Naive thymus-derived CD4-positive, alpha-beta T cell (primary cell): ENCODE measurements at regions of chr7 and their contacts with region 1.

Region 1: GRCh38 chr7:39633563-39634477 is 10.4 kb downstream of the RALA start:
- DNase-seq: peak in 7 of 9 donors; percentile 53 to 76 (median 68)
- ATAC-seq: peak; percentile 93
- H3K4me3 ChIP-seq: peak overlapping the region; percentile 37
- H3K4me3 Mint-ChIP-seq: peak overlapping the region; percentile 71 to 92 (median 82)
- H3K27ac ChIP-seq: peak overlapping the region; percentile 79
- H3K27ac Mint-ChIP-seq: peak overlapping the region; percentile 92 to 99 (median 98)
- H3K4me1 ChIP-seq: peaks cover 18 to 29% of the 10 kb centered on the region in 2 donors
- H3K4me1 Mint-ChIP-seq: peaks cover 53 to 93% (median 72%) of the 10 kb centered on the region in 7 donors
- H3K27me3 ChIP-seq: no peaks in the 10 kb centered on the region
- H3K27me3 Mint-ChIP-seq: no peaks in the 10 kb centered on the region

Region 2: GRCh38 chr7:39580149-39580874 is 53.5 kb before region 1 on chr7:
- CTCF ChIA-PET with region 1: interaction called, 5 read pairs
- POLR2A ChIA-PET with region 1: interaction called, 4 read pairs
- intact Hi-C with region 1: loop called in 1 of 2 experiments (anchors 2 kb)
- DNase-seq: peak; percentile 38 to 79 (median 73)
- ATAC-seq: peak; percentile 98
- H3K4me3 ChIP-seq: no peak overlapping the region
- H3K4me3 Mint-ChIP-seq: no peak overlapping the region
- H3K27ac ChIP-seq: no peak overlapping the region
- H3K27ac Mint-ChIP-seq: peak overlapping the region in 5 of 9 donors; percentile 23 to 61 (median 44)
- H3K4me1 ChIP-seq: no peaks in the 10 kb centered on the region
- H3K4me1 Mint-ChIP-seq: peaks cover 2 to 12% (median 10%) of the 10 kb centered on the region in 7 donors
- H3K27me3 ChIP-seq: no peaks in the 10 kb centered on the region
- H3K27me3 Mint-ChIP-seq: no peaks in the 10 kb centered on the region

Region 3: DNA sequence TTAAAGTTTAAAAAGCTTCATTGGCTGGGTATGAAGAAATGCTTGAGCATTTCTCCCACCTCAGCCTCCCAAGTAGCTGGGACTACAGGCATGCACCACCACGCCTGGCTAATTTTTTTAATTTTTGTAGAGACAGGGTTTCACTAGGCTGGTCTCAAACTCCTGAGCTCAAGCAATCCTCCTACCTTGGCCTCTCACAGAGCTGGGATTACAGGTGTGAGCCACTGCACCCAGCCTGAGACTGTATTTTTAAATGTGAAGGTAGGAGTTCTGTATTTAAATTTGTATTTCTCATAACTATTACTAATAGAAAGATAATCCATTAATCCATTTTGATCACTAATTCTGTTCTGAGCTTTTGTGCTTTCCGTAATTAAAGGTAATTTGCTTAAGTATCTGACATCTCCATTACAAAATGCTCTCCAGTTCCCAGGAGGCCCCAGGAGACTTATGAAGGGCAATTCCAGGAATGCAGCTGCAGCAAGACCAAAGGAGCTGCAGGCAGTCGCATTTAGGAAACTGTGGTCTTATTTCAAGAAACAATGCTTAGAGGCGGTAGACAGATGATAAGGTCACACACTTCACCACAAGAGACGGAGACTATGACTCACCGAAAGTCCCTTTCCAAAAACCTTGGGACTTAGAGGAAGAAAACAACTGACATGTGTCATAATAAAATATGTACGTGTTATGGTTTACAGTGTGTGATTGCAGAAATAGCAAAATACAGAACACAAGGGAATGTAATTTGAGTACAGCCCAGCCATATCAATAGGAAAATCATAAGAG is 44.3 kb before region 1 on chr7:
- CTCF ChIA-PET with region 1: no interaction called
- POLR2A ChIA-PET with region 1: no interaction called
- intact Hi-C with region 1: loop called in 1 of 2 experiments (anchors 1 kb)
- DNase-seq: peak in 8 of 9 donors; percentile 37 to 85 (median 60)
- ATAC-seq: peak; percentile 94
- H3K4me3 ChIP-seq: no peak overlapping the region
- H3K4me3 Mint-ChIP-seq: peak overlapping the region in 6 of 10 donors; percentile 19 to 78 (median 52)
- H3K27ac ChIP-seq: no peak overlapping the region
- H3K27ac Mint-ChIP-seq: peak overlapping the region in 8 of 9 donors; percentile 55 to 90 (median 77)
- H3K4me1 ChIP-seq: peaks cover 5 to 15% of the 10 kb centered on the region in 2 donors
- H3K4me1 Mint-ChIP-seq: peaks cover 10 to 54% (median 26%) of the 10 kb centered on the region in 7 donors
- H3K27me3 ChIP-seq: no peaks in the 10 kb centered on the region
- H3K27me3 Mint-ChIP-seq: no peaks in the 10 kb centered on the region

Region 4: DNA sequence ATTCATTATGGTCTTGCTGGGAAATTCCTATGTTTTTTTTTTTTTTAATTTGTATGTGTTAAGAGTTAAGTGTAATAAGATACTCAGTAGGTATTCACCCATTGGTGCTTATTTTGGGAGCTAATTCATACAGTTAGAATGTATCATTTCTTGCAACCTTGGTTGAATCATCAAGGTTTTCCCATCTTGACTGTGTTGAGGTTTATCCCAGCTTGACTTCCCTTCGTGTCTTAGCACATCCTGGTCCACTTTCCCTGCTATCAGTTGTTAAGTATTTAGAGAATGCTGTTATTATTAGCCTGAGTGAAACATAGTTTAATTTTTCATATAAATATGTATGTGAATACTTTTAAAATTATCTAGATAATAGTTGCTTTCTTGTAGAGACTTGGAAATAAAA is 10.3 kb after region 1 on chr7:
- CTCF ChIA-PET with region 1: no interaction called
- POLR2A ChIA-PET with region 1: interaction called, 3 read pairs
- intact Hi-C with region 1: loop called in 1 of 2 experiments (anchors 1 kb)
- DNase-seq: no peak
- ATAC-seq: no peak
- H3K4me3 ChIP-seq: no peak overlapping the region
- H3K4me3 Mint-ChIP-seq: no peak overlapping the region
- H3K27ac ChIP-seq: no peak overlapping the region
- H3K27ac Mint-ChIP-seq: peak overlapping the region in 1 of 9 donors; percentile 41
- H3K4me1 ChIP-seq: peaks cover 0 to 8% of the 10 kb centered on the region in 2 donors
- H3K4me1 Mint-ChIP-seq: peaks cover 20 to 92% (median 86%) of the 10 kb centered on the region in 7 donors
- H3K27me3 ChIP-seq: no peaks in the 10 kb centered on the region
- H3K27me3 Mint-ChIP-seq: no peaks in the 10 kb centered on the region

Region 5: DNA sequence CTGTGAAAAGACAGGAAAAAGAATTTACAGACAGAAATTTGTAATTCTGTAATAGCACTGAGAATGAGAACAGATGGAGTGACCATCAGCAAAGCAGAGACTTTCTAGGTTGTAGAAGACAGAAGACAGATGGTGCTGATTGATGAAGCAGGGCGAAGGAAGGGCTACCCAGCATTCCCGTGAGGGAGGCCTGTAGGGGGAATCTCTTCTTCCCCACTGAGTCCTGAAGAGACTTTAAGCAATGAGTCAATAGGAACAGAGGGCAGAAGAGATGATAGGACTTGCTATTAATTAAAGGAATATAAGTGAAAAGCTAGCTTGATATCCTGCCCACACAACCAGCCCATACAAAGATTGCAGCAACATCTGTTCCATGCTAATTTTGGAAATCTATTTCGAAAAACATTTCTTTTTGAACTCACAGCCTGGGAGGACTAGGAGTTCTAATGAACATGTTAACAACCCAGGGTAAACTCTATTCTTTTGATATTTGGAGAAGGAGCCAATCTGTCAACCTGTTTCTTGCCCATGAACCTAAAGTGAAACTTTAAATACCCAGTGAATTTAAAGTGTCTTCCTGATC is 33.6 kb after region 1 on chr7:
- CTCF ChIA-PET with region 1: no interaction called
- POLR2A ChIA-PET with region 1: no interaction called
- intact Hi-C with region 1: loop called (anchors 5 kb)
- DNase-seq: no peak
- ATAC-seq: no peak
- H3K4me3 ChIP-seq: no peak overlapping the region
- H3K4me3 Mint-ChIP-seq: peak overlapping the region in 1 of 10 donors; percentile 7
- H3K27ac ChIP-seq: no peak overlapping the region
- H3K27ac Mint-ChIP-seq: peak overlapping the region in 1 of 9 donors; percentile 15
- H3K4me1 ChIP-seq: no peaks in the 10 kb centered on the region
- H3K4me1 Mint-ChIP-seq: peaks cover 5 to 85% (median 63%) of the 10 kb centered on the region in 7 donors
- H3K27me3 ChIP-seq: no peaks in the 10 kb centered on the region
- H3K27me3 Mint-ChIP-seq: no peaks in the 10 kb centered on the region

Region 6: GRCh38 chr7:39686261-39686924 is 52.6 kb after region 1 on chr7:
- CTCF ChIA-PET with region 1: no interaction called
- POLR2A ChIA-PET with region 1: interaction called, 4 read pairs
- intact Hi-C with region 1: loop called in 1 of 2 experiments (anchors 5 kb)
- DNase-seq: no peak
- ATAC-seq: no peak
- H3K4me3 ChIP-seq: no peak overlapping the region
- H3K4me3 Mint-ChIP-seq: no peak overlapping the region
- H3K27ac ChIP-seq: no peak overlapping the region
- H3K27ac Mint-ChIP-seq: peak overlapping the region in 3 of 9 donors; percentile 13 to 32 (median 31)
- H3K4me1 ChIP-seq: peaks cover 0 to 4% of the 10 kb centered on the region in 2 donors
- H3K4me1 Mint-ChIP-seq: peaks cover 17 to 43% (median 33%) of the 10 kb centered on the region in 7 donors
- H3K27me3 ChIP-seq: no peaks in the 10 kb centered on the region
- H3K27me3 Mint-ChIP-seq: no peaks in the 10 kb centered on the region